ENCODE measurements at regions of chr7 and their contacts with region 1.

Region 1: GRCh38 chr7:26365077-26365900 is 73.6 kb downstream of the SNX10 start:
- DNase-seq: peak; percentile 51
- H3K4me3 Mint-ChIP-seq: no peak overlapping the region
- H3K27ac Mint-ChIP-seq: peak overlapping the region; percentile 31
- H3K4me1 Mint-ChIP-seq: peaks cover 12% of the 10 kb centered on the region
- H3K27me3 Mint-ChIP-seq: no peaks in the 10 kb centered on the region

Region 2: GRCh38 chr7:26318921-26319320 is 46.4 kb before region 1 on chr7:
- CTCF ChIA-PET with region 1: interaction called, 10 read pairs
- POLR2A ChIA-PET with region 1: no interaction called
- intact Hi-C with region 1: no loop called
- DNase-seq: no peak
- H3K4me3 Mint-ChIP-seq: no peak overlapping the region
- H3K27ac Mint-ChIP-seq: no peak overlapping the region
- H3K4me1 Mint-ChIP-seq: no peaks in the 10 kb centered on the region
- H3K27me3 Mint-ChIP-seq: no peaks in the 10 kb centered on the region

Region 3: GRCh38 chr7:26381476-26382353 is 16.4 kb after region 1 on chr7:
- CTCF ChIA-PET with region 1: interaction called, 15 read pairs
- POLR2A ChIA-PET with region 1: no interaction called
- intact Hi-C with region 1: no loop called
- DNase-seq: no peak
- H3K4me3 Mint-ChIP-seq: no peak overlapping the region
- H3K27ac Mint-ChIP-seq: no peak overlapping the region
- H3K4me1 Mint-ChIP-seq: no peaks in the 10 kb centered on the region
- H3K27me3 Mint-ChIP-seq: peaks cover 32% of the 10 kb centered on the region

Region 4: DNA sequence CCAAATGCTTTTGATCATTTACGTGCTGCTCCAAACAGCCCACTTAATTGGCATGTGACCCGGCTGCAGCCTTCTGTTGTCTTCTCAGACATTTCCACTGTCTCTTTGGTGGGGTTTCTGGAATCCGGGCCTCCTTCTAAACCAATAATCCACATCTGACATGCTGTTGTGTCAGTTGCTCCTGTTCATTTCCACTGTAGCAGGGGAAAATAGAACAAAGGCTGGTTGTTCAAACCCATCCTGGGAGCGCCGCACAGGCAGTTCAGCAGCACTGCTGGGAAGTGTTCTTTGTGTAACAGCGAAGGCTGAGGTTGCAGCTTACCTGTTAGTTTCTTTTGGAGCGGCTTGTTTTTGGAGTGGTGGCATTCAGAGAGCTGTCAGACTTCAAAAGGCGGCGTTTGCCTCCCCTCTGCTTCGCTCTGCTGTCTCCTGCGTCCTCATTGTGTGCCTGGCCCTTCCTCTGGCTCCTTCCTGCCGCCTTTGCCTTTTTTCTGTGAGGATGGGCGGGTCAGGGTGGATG is 75.8 kb after region 1 on chr7:
- CTCF ChIA-PET with region 1: no interaction called
- POLR2A ChIA-PET with region 1: no interaction called
- intact Hi-C with region 1: no loop called
- DNase-seq: no peak
- H3K4me3 Mint-ChIP-seq: no peak overlapping the region
- H3K27ac Mint-ChIP-seq: no peak overlapping the region
- H3K4me1 Mint-ChIP-seq: no peaks in the 10 kb centered on the region
- H3K27me3 Mint-ChIP-seq: peaks cover 6% of the 10 kb centered on the region

Region 5: DNA sequence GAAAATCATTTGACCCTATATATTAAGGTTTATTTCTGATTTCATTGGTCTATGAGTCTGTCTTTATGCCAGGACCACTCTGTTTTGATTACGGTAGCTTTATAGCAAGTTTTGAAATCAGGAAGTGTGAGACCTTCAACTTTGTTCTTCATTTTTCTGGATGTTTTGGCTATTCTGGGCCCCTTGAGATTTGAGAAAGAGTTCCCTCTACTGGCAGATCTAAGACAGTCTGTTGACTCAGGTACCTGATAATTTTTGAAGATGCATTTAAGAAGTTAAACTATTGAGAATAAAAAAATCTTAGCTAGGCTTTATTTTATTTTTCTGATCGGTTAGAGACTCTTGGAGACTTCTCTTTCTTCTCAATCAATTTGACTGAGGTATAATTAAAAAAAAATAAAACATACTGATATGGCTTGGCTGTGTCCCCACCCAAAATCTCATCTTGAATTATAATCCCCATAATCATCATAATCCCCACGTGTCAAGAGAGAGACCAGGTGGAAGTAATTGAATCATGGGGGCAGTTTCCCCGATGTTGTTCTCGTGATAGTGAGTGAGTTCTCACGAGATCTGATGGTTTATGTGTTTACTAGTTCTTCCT is 135.6 kb after region 1 on chr7:
- CTCF ChIA-PET with region 1: interaction called, 14 read pairs
- POLR2A ChIA-PET with region 1: no interaction called
- intact Hi-C with region 1: loop called (anchors 2 kb)
- DNase-seq: no peak
- H3K4me3 Mint-ChIP-seq: no peak overlapping the region
- H3K27ac Mint-ChIP-seq: no peak overlapping the region
- H3K4me1 Mint-ChIP-seq: no peaks in the 10 kb centered on the region
- H3K27me3 Mint-ChIP-seq: peaks cover 10% of the 10 kb centered on the region

Region 6: GRCh38 chr7:26538689-26539088 is 173.4 kb after region 1 on chr7:
- CTCF ChIA-PET with region 1: no interaction called
- POLR2A ChIA-PET with region 1: no interaction called
- intact Hi-C with region 1: no loop called
- DNase-seq: no peak
- H3K4me3 Mint-ChIP-seq: no peak overlapping the region
- H3K27ac Mint-ChIP-seq: no peak overlapping the region
- H3K4me1 Mint-ChIP-seq: no peaks in the 10 kb centered on the region
- H3K27me3 Mint-ChIP-seq: peaks cover 46% of the 10 kb centered on the region

Region 7: GRCh38 chr7:27010068-27010467 is 644.8 kb after region 1 on chr7:
- CTCF ChIA-PET with region 1: no interaction called
- POLR2A ChIA-PET with region 1: no interaction called
- intact Hi-C with region 1: no loop called
- DNase-seq: no peak
- H3K4me3 Mint-ChIP-seq: no peak overlapping the region
- H3K27ac Mint-ChIP-seq: no peak overlapping the region
- H3K4me1 Mint-ChIP-seq: no peaks in the 10 kb centered on the region
- H3K27me3 Mint-ChIP-seq: peaks cover 13% of the 10 kb centered on the region

Measured in activated CD4-positive, alpha-beta memory T cell treated with anti-CD3 and anti-CD28 coated beads for 36 hours (primary cell).